ENCODE measurements at regions of chr5 and their contacts with region 1.

Region 1: GRCh38 chr5:96868603-96869371 is 7.5 kb upstream of the ERAP2 start:
- DNase-seq: peak in 4 of 9 experiments; percentile 24 to 79 (median 50)
- ATAC-seq: peak; percentile 99
- H3K4me3 ChIP-seq: no peak overlapping the region
- H3K4me3 Mint-ChIP-seq: no peak overlapping the region
- H3K27ac ChIP-seq: no peak overlapping the region
- H3K27ac Mint-ChIP-seq: no peak overlapping the region
- H3K4me1 ChIP-seq: peaks cover 28% of the 10 kb centered on the region
- H3K4me1 Mint-ChIP-seq: peaks cover 41% of the 10 kb centered on the region
- H3K27me3 ChIP-seq: no peaks in the 10 kb centered on the region
- H3K27me3 Mint-ChIP-seq: no peaks in the 10 kb centered on the region
- CTCF ChIP-seq: peak; percentile 96

Region 2: GRCh38 chr5:96565582-96566265 is 303.1 kb before region 1 on chr5:
- CTCF ChIA-PET with region 1: no interaction called
- POLR2A ChIA-PET with region 1: no interaction called
- intact Hi-C with region 1: no loop called
- DNase-seq: no peak
- ATAC-seq: no peak
- H3K4me3 ChIP-seq: no peak overlapping the region
- H3K4me3 Mint-ChIP-seq: no peak overlapping the region
- H3K27ac ChIP-seq: no peak overlapping the region
- H3K27ac Mint-ChIP-seq: no peak overlapping the region
- H3K4me1 ChIP-seq: peaks cover 3% of the 10 kb centered on the region
- H3K4me1 Mint-ChIP-seq: peaks cover 12% of the 10 kb centered on the region
- H3K27me3 ChIP-seq: no peaks in the 10 kb centered on the region
- H3K27me3 Mint-ChIP-seq: no peaks in the 10 kb centered on the region
- CTCF ChIP-seq: no peak

Region 3: GRCh38 chr5:96752341-96753016 is 116.3 kb before region 1 on chr5:
- CTCF ChIA-PET with region 1: interaction called, 11 read pairs
- POLR2A ChIA-PET with region 1: no interaction called
- intact Hi-C with region 1: loop called in 1 of 2 experiments (anchors 1 kb)
- DNase-seq: peak in 4 of 9 experiments; percentile 14 to 82 (median 65)
- ATAC-seq: peak; percentile 44
- H3K4me3 ChIP-seq: no peak overlapping the region
- H3K4me3 Mint-ChIP-seq: no peak overlapping the region
- H3K27ac ChIP-seq: no peak overlapping the region
- H3K27ac Mint-ChIP-seq: no peak overlapping the region
- H3K4me1 ChIP-seq: no peaks in the 10 kb centered on the region
- H3K4me1 Mint-ChIP-seq: no peaks in the 10 kb centered on the region
- H3K27me3 ChIP-seq: no peaks in the 10 kb centered on the region
- H3K27me3 Mint-ChIP-seq: no peaks in the 10 kb centered on the region
- CTCF ChIP-seq: peak; percentile 75

Region 4: GRCh38 chr5:96857933-96858332 is 10.9 kb before region 1 on chr5:
- CTCF ChIA-PET with region 1: interaction called, 15 read pairs
- POLR2A ChIA-PET with region 1: no interaction called
- intact Hi-C with region 1: no loop called
- DNase-seq: no peak
- ATAC-seq: no peak
- H3K4me3 ChIP-seq: no peak overlapping the region
- H3K4me3 Mint-ChIP-seq: no peak overlapping the region
- H3K27ac ChIP-seq: no peak overlapping the region
- H3K27ac Mint-ChIP-seq: no peak overlapping the region
- H3K4me1 ChIP-seq: no peaks in the 10 kb centered on the region
- H3K4me1 Mint-ChIP-seq: no peaks in the 10 kb centered on the region
- H3K27me3 ChIP-seq: no peaks in the 10 kb centered on the region
- H3K27me3 Mint-ChIP-seq: no peaks in the 10 kb centered on the region
- CTCF ChIP-seq: no peak

Region 5: GRCh38 chr5:96896806-96897205 is 28.0 kb after region 1 on chr5:
- CTCF ChIA-PET with region 1: interaction called, 9 read pairs
- POLR2A ChIA-PET with region 1: interaction called, 7 read pairs
- intact Hi-C with region 1: loop called (anchors 2 kb)
- DNase-seq: peak in 2 of 9 experiments; percentile 19 to 53
- ATAC-seq: peak; percentile 45
- H3K4me3 ChIP-seq: peak overlapping the region in 1 of 2 experiments; percentile 19
- H3K4me3 Mint-ChIP-seq: peak overlapping the region; percentile 81
- H3K27ac ChIP-seq: peak overlapping the region; percentile 31 to 75
- H3K27ac Mint-ChIP-seq: peak overlapping the region; percentile 95
- H3K4me1 ChIP-seq: peaks cover 19% of the 10 kb centered on the region
- H3K4me1 Mint-ChIP-seq: peaks cover 48% of the 10 kb centered on the region
- H3K27me3 ChIP-seq: no peaks in the 10 kb centered on the region
- H3K27me3 Mint-ChIP-seq: no peaks in the 10 kb centered on the region
- CTCF ChIP-seq: no peak

Region 6: DNA sequence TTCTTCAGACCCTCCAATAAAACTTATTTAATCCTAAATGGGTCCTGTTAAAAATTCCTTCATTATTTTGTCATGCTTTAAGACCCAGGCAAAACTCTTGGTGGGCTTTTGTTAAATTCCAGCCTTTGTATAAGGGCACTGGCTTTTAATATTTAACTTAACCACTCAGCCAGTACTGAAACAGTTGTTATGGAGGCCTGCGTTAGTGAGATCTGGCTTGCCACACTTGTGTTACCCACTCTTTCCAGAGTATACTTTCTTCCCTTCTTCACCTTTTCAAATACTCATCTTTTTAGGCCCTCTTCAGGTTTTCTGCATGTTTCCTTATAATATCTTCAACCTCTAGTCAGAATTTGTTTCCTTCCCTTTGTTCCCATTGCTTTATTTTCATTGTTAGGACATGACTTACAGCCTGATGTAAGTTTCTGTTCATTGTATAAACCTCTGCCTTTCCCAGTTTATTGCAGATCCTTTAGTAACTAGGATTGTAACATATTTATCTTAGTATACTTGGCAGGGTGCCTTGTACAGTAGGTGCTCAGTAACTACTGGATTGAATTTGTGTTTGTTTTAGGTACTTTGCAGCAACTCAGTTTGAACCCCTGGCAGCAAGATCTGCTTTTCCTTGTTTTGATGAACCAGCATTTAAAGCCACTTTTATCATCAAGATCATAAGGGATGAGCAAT is 115.9 kb after region 1 on chr5:
- CTCF ChIA-PET with region 1: interaction called, 7 read pairs
- POLR2A ChIA-PET with region 1: no interaction called
- intact Hi-C with region 1: loop called (anchors 5 kb)
- DNase-seq: no peak
- ATAC-seq: no peak
- H3K4me3 ChIP-seq: no peak overlapping the region
- H3K4me3 Mint-ChIP-seq: no peak overlapping the region
- H3K27ac ChIP-seq: no peak overlapping the region
- H3K27ac Mint-ChIP-seq: peak overlapping the region; percentile 8
- H3K4me1 ChIP-seq: peaks cover 3% of the 10 kb centered on the region
- H3K4me1 Mint-ChIP-seq: peaks cover 61% of the 10 kb centered on the region
- H3K27me3 ChIP-seq: no peaks in the 10 kb centered on the region
- H3K27me3 Mint-ChIP-seq: no peaks in the 10 kb centered on the region
- CTCF ChIP-seq: no peak

Region 7: DNA sequence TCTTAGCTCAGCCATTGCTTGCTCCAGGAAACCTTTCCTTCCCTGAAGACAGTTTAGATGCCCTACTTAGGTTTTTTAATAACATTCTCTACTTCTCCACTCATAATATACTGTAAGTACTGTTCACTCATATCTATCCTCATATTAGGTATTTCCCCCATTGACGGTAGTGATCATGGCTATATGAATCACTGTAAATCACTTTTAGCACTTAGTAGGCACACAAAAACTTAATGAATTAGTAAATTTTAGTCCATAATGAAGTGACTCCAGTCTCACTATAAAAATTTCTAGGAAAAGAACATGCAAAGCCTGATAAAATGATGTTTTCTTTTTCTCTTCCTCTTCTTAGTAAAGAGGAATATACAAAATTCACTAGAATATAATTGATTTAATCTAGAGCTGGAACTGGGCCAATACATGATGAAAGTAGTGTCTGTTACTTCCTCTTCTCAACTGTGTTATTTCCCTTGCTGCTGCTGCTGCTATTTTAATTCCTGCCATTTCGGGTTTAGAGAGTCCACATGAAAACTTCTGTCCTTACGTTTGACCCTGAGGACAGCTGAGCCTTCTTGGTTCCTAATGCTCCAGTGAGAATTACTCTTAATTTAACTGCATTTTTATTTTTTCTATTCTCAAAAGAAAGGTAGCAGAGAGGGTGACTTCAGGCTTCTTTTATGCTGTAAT is 140.6 kb after region 1 on chr5:
- CTCF ChIA-PET with region 1: interaction called, 10 read pairs
- POLR2A ChIA-PET with region 1: no interaction called
- intact Hi-C with region 1: no loop called
- DNase-seq: peak in 2 of 9 experiments; percentile 51 to 70
- ATAC-seq: peak; percentile 58
- H3K4me3 ChIP-seq: no peak overlapping the region
- H3K4me3 Mint-ChIP-seq: peak overlapping the region; percentile 32
- H3K27ac ChIP-seq: no peak overlapping the region
- H3K27ac Mint-ChIP-seq: peak overlapping the region; percentile 84
- H3K4me1 ChIP-seq: peaks cover 23% of the 10 kb centered on the region
- H3K4me1 Mint-ChIP-seq: peaks cover 42% of the 10 kb centered on the region
- H3K27me3 ChIP-seq: no peaks in the 10 kb centered on the region
- H3K27me3 Mint-ChIP-seq: no peaks in the 10 kb centered on the region
- CTCF ChIP-seq: no peak

Region 8: DNA sequence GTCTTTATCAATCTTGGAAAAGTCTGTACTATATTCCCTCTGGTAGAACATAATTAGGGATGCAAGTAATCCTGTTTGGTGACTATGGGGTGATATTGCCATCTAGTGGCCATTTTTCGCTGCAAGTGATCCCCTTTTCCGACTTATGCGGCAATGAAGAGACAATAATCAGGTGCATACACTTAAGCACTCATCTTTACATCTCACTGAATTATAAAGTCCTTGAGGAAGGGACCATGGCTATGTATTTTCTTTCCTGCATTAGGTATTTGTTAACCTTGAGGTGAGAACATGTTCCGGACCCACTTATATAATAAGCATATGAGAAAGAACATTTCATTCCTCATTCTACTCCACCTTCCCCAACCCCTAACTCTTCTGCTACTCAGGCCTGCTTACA is 293.3 kb after region 1 on chr5:
- CTCF ChIA-PET with region 1: interaction called, 123 read pairs
- POLR2A ChIA-PET with region 1: interaction called, 4 read pairs
- intact Hi-C with region 1: loop called (anchors 1 kb)
- DNase-seq: peak in 7 of 9 experiments; percentile 21 to 79 (median 54)
- ATAC-seq: peak; percentile 58
- H3K4me3 ChIP-seq: no peak overlapping the region
- H3K4me3 Mint-ChIP-seq: no peak overlapping the region
- H3K27ac ChIP-seq: no peak overlapping the region
- H3K27ac Mint-ChIP-seq: no peak overlapping the region
- H3K4me1 ChIP-seq: no peaks in the 10 kb centered on the region
- H3K4me1 Mint-ChIP-seq: peaks cover 10% of the 10 kb centered on the region
- H3K27me3 ChIP-seq: no peaks in the 10 kb centered on the region
- H3K27me3 Mint-ChIP-seq: no peaks in the 10 kb centered on the region
- CTCF ChIP-seq: peak; percentile 93

Measured in CD8-positive, alpha-beta T cell (primary cell).